ENCODE measurements at regions of chr5 and their contacts with region 1.

Region 1: DNA sequence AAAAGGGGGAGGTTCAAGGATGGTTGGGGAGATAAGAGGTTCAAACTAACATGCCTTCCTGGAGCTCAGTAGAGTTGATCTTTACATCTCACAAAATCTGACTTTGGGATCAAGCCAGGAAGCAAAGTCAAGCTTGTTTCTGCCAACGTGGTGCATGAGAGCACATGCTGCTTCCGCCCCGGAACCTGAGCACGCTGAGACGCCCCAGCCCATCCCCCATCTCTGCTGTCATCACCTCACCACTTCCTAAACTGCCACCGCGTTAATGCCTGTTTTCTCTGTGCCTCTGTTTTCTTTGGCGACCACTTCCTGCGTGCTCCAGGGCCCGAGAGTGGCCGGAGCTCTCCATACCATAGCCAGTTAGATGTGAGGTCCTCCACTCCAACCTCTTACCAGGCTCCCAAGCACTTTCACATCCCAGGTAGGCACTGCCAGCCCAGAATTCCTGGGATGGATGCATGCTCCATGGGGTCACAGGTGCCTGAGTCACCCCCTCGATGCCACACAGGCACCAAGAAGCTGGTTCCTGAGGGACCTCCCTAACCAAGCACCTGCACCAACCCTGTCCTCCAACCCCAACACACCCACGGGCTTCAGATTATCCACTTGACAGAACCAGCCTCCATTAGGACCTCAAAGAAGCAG is 31.2 kb upstream of the AFAP1L1 start:
- DNase-seq: peak; percentile 46 to 94 (median 90)
- ATAC-seq: peak; percentile 93
- H3K4me3 ChIP-seq: peak overlapping the region; percentile 2
- H3K4me3 Mint-ChIP-seq: peak overlapping the region; percentile 38 to 79 (median 66)
- H3K27ac ChIP-seq: peak overlapping the region; percentile 67
- H3K27ac Mint-ChIP-seq: peak overlapping the region; percentile 83 to 98 (median 93)
- H3K4me1 ChIP-seq: peaks cover 21 to 39% of the 10 kb centered on the region in 2 donors
- H3K4me1 Mint-ChIP-seq: peaks cover 8 to 71% (median 43%) of the 10 kb centered on the region in 7 donors
- H3K27me3 ChIP-seq: no peaks in the 10 kb centered on the region
- H3K27me3 Mint-ChIP-seq: peaks cover 0 to 23% (median 1%) of the 10 kb centered on the region in 5 donors

Region 2: DNA sequence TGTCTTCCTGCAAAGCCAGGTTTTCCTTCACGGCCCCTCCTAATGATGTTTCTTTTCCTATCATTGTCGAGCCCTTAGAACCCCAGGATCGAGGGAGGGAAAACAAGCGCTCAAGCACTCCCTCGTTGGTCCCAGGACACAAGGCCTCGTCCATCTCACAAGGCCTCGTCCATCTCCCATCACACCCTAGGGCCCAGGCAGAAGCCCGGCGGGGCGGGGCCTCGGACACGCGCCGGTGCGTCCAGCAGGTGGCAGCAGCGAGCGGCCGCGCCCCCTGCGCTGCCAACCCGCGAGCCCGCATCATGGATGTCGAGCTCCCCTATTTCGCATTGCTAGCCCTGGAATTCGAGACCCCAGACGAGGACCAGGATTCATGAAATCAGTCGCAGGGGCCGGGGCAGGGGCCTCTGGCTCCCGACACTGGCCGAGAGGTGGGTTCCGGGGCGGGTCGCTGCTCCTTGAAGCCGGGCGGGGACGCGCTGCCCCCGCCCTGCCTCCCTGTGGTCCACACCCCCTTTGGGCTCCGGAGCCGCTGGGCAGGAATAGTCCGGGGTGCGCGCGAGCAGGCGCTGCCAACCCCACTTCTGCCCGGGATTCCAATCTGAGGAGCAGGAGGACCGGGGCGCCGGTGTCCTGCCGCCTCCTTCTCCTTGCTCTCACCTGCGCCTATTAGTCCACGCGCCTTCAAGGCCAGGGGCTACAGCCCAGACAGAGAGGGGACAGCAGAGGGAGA is 99.1 kb before region 1 on chr5 and contains the start of gene ABLIM3:
- CTCF ChIA-PET with region 1: interaction called, 6 read pairs
- POLR2A ChIA-PET with region 1: no interaction called
- intact Hi-C with region 1: loop called in 1 of 2 experiments (anchors 1 kb)
- DNase-seq: peak; percentile 49 to 87 (median 74)
- ATAC-seq: peak; percentile 96
- H3K4me3 ChIP-seq: peak within 1 kb of the TSS; percentile 62
- H3K4me3 Mint-ChIP-seq: peak within 1 kb of the TSS; percentile 11 to 79 (median 62)
- H3K27ac ChIP-seq: no peak within 1 kb of the TSS
- H3K27ac Mint-ChIP-seq: peak within 1 kb of the TSS in 1 of 9 donors; percentile 71
- H3K4me1 ChIP-seq: peaks cover 3 to 4% of the 10 kb centered on the region in 2 donors
- H3K4me1 Mint-ChIP-seq: peaks cover 0 to 6% (median 0%) of the 10 kb centered on the region in 7 donors
- H3K27me3 ChIP-seq: peaks cover 0 to 4% of the 10 kb centered on the region in 2 donors
- H3K27me3 Mint-ChIP-seq: peaks cover 5 to 58% (median 28%) of the 10 kb centered on the region in 5 donors
- total RNA-seq, gene ABLIM3: 0.08 to 1.3 TPM in 2 of 5 experiments, not detected in the others

Region 3: DNA sequence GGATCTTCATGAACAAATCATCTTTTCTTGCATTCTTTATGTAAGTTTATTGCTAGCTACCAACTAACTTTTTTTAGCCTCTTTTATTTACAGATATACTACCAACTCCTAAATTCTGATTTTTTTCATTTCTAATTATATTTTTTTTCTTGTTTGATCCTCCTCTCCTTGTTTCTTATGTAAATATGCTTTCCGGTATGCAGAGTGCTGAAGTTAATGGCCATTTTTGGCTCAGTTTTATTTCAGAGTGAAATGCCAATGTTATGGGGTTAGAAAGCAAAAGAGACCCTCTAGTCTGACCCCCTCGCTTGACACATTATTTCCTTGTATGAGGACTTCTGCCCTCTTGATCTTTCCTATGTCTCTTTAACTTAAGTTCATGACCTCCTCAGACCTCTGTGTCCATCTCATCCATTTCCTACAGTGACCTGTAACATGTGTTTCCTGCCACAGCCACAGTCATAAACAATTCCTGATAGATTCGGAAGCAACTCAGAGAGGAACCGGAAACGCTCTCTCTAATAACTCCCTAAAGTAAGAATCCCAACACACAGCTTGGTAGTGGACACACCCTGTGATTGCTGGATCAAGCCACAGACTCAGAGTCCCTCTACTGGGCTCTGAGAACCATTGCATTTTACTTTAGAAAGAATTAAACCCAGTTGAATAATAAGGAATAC is 11.7 kb before region 1 on chr5:
- CTCF ChIA-PET with region 1: interaction called, 4 read pairs
- POLR2A ChIA-PET with region 1: interaction called, 10 read pairs
- intact Hi-C with region 1: no loop called
- DNase-seq: no peak
- ATAC-seq: no peak
- H3K4me3 ChIP-seq: no peak overlapping the region
- H3K4me3 Mint-ChIP-seq: no peak overlapping the region
- H3K27ac ChIP-seq: no peak overlapping the region
- H3K27ac Mint-ChIP-seq: no peak overlapping the region
- H3K4me1 ChIP-seq: no peaks in the 10 kb centered on the region
- H3K4me1 Mint-ChIP-seq: peaks cover 0 to 4% (median 2%) of the 10 kb centered on the region in 7 donors
- H3K27me3 ChIP-seq: no peaks in the 10 kb centered on the region
- H3K27me3 Mint-ChIP-seq: peaks cover 0 to 13% (median 6%) of the 10 kb centered on the region in 5 donors